ENCODE measurements at regions of chr1 and their contacts with region 1.

Region 1: DNA sequence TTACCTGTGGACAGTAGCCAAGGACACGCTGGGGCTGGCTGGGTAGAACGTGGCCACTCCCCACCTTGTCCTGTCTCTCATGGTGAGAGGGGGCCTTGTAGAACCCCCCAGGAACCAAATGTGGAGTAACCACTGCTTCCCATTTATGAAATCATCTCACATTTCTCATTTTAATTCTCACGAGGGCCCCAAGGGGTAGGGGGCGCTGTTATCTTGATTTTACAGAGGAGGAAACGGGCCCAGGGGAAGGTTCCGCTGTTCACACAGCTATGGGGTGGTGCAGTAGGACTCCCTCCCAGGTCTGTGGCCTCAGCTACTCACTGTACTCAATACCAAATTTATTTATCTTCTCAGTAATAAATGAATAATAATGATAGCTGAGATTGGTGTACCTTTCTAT is 5.5 kb downstream of the SMPDL3B start:
- DNase-seq: peak in 3 of 4 donors; percentile 22 to 62 (median 37)
- ATAC-seq: no peak
- H3K4me3 ChIP-seq: no peak overlapping the region
- H3K27ac ChIP-seq: no peak overlapping the region
- H3K4me1 ChIP-seq: peaks cover 9% of the 10 kb centered on the region
- H3K27me3 ChIP-seq: no peaks in the 10 kb centered on the region
- CTCF ChIP-seq: peak in 1 of 7 experiments; percentile 8
- POLR2A ChIP-seq: no peak

Region 2: GRCh38 chr1:27804791-27805190 is 135.5 kb before region 1 on chr1:
- intact Hi-C with region 1: no loop called
- DNase-seq: no peak
- ATAC-seq: no peak
- H3K4me3 ChIP-seq: no peak overlapping the region
- H3K27ac ChIP-seq: no peak overlapping the region
- H3K4me1 ChIP-seq: no peaks in the 10 kb centered on the region
- H3K27me3 ChIP-seq: no peaks in the 10 kb centered on the region
- CTCF ChIP-seq: no peak
- POLR2A ChIP-seq: no peak

Region 3: DNA sequence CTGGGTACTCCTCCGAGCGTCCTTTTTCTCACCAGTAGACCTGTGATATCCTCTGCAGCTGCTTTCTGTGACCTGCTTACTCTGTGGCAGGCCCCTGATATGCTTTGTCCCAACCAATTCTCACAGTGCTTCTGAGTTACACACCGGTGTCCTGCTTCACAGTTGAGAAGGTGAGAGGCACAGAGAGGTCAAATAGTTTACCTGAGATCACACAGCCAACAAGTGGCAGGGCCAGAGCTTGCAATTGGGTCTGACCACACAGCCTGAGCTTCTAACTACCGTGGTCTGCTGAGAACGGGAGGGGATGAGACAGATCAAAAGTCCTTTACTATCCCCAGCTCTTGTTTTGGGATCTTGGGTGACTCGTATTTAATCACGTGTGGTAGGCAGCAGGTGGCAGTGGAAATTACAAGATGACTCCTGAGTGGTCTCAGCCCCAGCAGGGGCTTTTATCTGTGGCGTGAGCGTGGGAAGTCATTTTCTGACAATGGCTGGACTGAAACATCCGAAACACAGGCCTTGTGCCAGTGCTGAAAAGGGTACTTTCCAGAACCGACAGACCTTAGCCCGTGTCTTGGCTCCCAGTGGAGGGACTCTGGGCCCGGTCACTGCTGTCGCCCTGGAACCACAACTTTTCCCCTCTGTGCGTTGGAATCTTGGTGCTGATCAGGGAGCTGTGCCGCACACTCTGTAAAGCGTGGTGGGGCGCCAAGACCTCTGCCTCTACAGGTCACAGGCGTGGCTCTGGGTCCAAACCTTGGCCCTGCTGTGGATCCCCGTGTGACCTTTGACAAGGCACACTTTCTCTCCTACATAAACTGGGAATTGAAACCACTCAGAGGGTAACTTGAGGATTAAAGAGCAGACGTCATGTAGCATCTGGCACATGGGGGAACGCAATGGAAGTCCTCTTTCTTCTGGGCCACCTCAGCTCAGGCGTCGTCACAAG is 56.0 kb before region 1 on chr1:
- intact Hi-C with region 1: loop called (anchors 10 kb)
- DNase-seq: peak in 1 of 4 donors; percentile 44
- ATAC-seq: no peak
- H3K4me3 ChIP-seq: no peak overlapping the region
- H3K27ac ChIP-seq: peak overlapping the region in 2 of 4 donors; percentile 25 to 82
- H3K4me1 ChIP-seq: no peaks in the 10 kb centered on the region
- H3K27me3 ChIP-seq: no peaks in the 10 kb centered on the region
- CTCF ChIP-seq: no peak
- POLR2A ChIP-seq: no peak

Measured in body of pancreas (tissue), 4 donors.